Body of pancreas (tissue), 4 donors: ENCODE measurements at regions of chr10 and their contacts with region 1.

Region 1: DNA sequence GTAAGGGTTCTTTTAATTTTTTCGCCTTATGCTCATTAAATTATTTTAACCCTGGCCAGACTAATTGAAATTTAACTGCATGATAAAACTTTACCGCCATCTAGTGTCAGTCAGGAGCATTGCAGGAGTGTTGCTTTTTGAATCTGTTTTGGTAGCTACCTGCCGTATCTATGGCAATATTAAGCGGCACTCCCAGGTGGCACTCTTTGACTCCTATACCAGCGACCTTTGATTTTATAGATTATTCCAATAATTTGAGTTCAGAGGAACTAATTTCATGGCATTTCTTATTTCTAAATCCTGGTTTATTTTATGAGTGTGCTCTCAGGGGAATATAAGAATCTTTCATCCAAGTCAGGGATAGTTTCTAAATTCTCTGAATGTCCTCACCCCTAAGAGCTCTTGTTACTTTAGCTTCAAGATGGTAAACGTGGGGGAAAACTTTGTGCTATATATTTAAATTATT is 198.9 kb downstream of the REEP3 start:
- DNase-seq: peak; percentile 70 to 78 (median 76)
- ATAC-seq: peak; percentile 91
- H3K4me3 ChIP-seq: no peak overlapping the region
- H3K27ac ChIP-seq: peak overlapping the region in 1 of 4 donors; percentile 41
- H3K4me1 ChIP-seq: peaks cover 14% of the 10 kb centered on the region
- H3K27me3 ChIP-seq: no peaks in the 10 kb centered on the region
- CTCF ChIP-seq: peak; percentile 90 to 99 (median 97)
- POLR2A ChIP-seq: peak in 1 of 3 donors; percentile 6

Region 2: GRCh38 chr10:63210611-63211196 is 509.4 kb before region 1 on chr10:
- intact Hi-C with region 1: loop called (anchors 5 kb)
- DNase-seq: no peak
- ATAC-seq: no peak
- H3K4me3 ChIP-seq: no peak overlapping the region
- H3K27ac ChIP-seq: no peak overlapping the region
- H3K4me1 ChIP-seq: peaks cover 11% of the 10 kb centered on the region
- H3K27me3 ChIP-seq: no peaks in the 10 kb centered on the region
- CTCF ChIP-seq: no peak
- POLR2A ChIP-seq: no peak

Region 3: DNA sequence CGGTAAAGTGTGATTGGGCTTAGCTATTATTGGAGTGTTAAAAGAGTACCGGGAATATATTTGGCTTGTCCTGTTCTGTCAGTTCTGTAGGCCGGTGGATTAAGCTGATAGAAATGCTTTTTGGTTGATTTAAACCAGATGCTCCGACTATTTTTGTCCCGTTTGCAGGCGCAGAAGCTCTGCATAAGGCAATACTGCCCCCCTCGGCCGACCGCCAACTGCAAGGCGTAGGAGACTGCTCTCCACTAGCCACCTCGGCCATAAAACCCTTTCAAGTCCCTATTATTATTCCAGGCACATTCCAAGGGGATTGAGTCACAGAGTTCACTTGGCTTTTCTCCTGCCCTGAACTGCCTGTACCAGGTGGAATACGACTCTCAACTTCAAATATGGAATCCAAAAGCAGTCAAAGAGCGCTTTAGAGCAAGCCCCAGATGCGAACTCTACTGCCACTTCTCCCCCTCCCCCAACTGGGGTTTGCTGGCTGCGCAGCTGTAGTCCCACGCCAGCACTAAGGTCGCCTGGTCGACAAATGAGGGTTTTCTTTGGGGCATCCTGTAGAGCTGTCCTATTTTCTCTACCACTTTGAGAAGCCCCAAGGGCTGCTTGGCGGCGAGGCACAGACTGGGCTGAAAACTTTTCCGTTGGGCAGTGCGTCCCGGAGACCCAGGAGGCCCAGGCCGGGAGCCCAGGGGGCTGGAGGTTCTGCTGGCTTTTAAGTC is 90.6 kb before region 1 on chr10:
- intact Hi-C with region 1: loop called (anchors 5 kb)
- DNase-seq: peak; percentile 95 to 98 (median 96)
- ATAC-seq: peak; percentile 77
- H3K4me3 ChIP-seq: peak overlapping the region; percentile 40 to 49
- H3K27ac ChIP-seq: peak overlapping the region; percentile 98 to 100 (median 100)
- H3K4me1 ChIP-seq: peaks cover 18% of the 10 kb centered on the region
- H3K27me3 ChIP-seq: no peaks in the 10 kb centered on the region
- CTCF ChIP-seq: peak; percentile 44 to 91 (median 78)
- POLR2A ChIP-seq: peak in 2 of 3 donors; percentile 25 to 86

Region 4: GRCh38 chr10:63644418-63645142 is 75.5 kb before region 1 on chr10:
- intact Hi-C with region 1: no loop called
- DNase-seq: no peak
- ATAC-seq: no peak
- H3K4me3 ChIP-seq: no peak overlapping the region
- H3K27ac ChIP-seq: peak overlapping the region in 1 of 4 donors; percentile 15
- H3K4me1 ChIP-seq: no peaks in the 10 kb centered on the region
- H3K27me3 ChIP-seq: no peaks in the 10 kb centered on the region
- CTCF ChIP-seq: no peak
- POLR2A ChIP-seq: no peak

Region 5: GRCh38 chr10:64708884-64709681 is 989.0 kb after region 1 on chr10:
- intact Hi-C with region 1: no loop called
- DNase-seq: no peak
- ATAC-seq: no peak
- H3K4me3 ChIP-seq: no peak overlapping the region
- H3K27ac ChIP-seq: no peak overlapping the region
- H3K4me1 ChIP-seq: no peaks in the 10 kb centered on the region
- H3K27me3 ChIP-seq: no peaks in the 10 kb centered on the region
- CTCF ChIP-seq: no peak
- POLR2A ChIP-seq: no peak